ENCODE measurements at regions of chr6 and their contacts with region 1.

Region 1: GRCh38 chr6:47650553-47651432 is 47.6 kb upstream of the ADGRF4 start:
- DNase-seq: no peak
- H3K4me3 ChIP-seq: no peak overlapping the region
- H3K27ac ChIP-seq: no peak overlapping the region
- H3K4me1 ChIP-seq: no peaks in the 10 kb centered on the region
- H3K27me3 ChIP-seq: no peaks in the 10 kb centered on the region
- CTCF ChIP-seq: no peak

Region 2: GRCh38 chr6:47407348-47408281 is 243.2 kb before region 1 on chr6:
- CTCF ChIA-PET with region 1: interaction called, 14 read pairs
- POLR2A ChIA-PET with region 1: no interaction called
- intact Hi-C with region 1: no loop called
- DNase-seq: no peak
- H3K4me3 ChIP-seq: no peak overlapping the region
- H3K27ac ChIP-seq: no peak overlapping the region
- H3K4me1 ChIP-seq: no peaks in the 10 kb centered on the region
- H3K27me3 ChIP-seq: no peaks in the 10 kb centered on the region
- CTCF ChIP-seq: no peak

Measured in A673 (cell line).